ENCODE measurements at regions of chr14 and their contacts with region 1.

Region 1: DNA sequence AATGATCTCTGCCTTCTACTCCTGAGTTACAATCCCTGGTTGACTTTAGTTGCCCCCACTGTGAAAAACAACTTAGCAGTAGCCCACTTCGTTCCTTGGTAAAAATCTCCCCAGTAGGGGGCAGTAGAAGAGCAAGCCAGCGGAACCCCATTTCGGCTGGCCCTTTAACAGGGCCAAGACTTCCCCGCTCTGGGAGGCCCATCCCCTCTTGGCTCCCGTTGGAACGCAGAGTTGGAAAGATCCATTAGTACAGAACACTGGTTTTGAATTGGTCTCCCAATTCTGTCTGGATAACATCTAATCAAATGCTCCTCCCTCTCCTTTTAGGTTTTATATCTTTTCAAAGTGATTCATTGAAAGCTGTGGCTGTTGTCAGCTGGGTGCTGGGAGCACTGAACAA is 1133.3 kb downstream of the BCL11B start:
- DNase-seq: peak; percentile 66
- H3K4me3 Mint-ChIP-seq: no peak overlapping the region
- H3K27ac Mint-ChIP-seq: peak overlapping the region; percentile 58
- H3K4me1 Mint-ChIP-seq: peaks cover 69% of the 10 kb centered on the region
- H3K27me3 Mint-ChIP-seq: no peaks in the 10 kb centered on the region

Region 2: DNA sequence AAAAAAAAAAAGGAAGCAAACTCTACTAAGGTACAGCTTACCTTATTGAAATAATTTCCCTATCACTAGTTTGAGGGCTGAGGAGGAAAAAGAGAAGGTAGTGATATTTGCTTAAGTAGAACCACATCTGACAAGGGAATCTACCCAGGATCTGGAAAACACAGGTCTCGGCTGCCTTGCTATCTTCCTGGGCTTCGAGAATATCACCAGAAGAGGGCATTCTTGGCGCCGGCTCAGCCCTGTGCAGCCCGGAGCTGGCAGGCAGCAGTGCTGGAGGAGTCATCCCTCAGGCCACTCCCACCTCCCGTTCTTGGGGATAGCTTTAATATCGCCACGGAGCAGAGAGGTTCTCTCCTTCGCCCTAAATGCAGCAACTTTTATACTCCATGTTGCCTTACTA is 160.3 kb before region 1 on chr14:
- CTCF ChIA-PET with region 1: interaction called, 55 read pairs
- POLR2A ChIA-PET with region 1: interaction called, 46 read pairs
- DNase-seq: peak; percentile 81
- H3K4me3 Mint-ChIP-seq: peak overlapping the region; percentile 86
- H3K27ac Mint-ChIP-seq: peak overlapping the region; percentile 90
- H3K4me1 Mint-ChIP-seq: peaks cover 50% of the 10 kb centered on the region
- H3K27me3 Mint-ChIP-seq: no peaks in the 10 kb centered on the region

Region 3: GRCh38 chr14:98114122-98114895 is 24.4 kb before region 1 on chr14:
- CTCF ChIA-PET with region 1: no interaction called
- POLR2A ChIA-PET with region 1: no interaction called
- DNase-seq: no peak
- H3K4me3 Mint-ChIP-seq: no peak overlapping the region
- H3K27ac Mint-ChIP-seq: no peak overlapping the region
- H3K4me1 Mint-ChIP-seq: no peaks in the 10 kb centered on the region
- H3K27me3 Mint-ChIP-seq: no peaks in the 10 kb centered on the region

Region 4: DNA sequence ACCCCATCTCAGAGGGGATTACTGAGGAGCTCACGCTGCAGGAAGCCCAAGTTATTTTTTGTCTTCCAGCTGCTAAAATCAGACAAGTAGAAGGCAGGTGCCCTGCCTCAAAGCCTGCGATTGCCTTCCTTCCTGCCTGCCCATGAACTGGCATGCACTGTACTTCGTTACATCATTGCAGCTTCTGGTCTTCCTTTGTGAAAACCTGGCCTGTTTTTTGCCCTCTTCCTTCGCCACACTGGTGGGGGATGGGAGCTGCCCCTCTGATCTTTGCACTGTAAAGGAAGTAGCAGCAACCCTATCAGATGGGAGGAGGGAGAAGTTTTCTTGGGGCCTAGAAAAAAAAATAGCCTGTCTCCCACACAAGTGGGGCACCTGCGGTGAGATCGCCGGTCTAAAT is 34.6 kb after region 1 on chr14:
- CTCF ChIA-PET with region 1: interaction called, 36 read pairs
- POLR2A ChIA-PET with region 1: interaction called, 24 read pairs
- DNase-seq: peak; percentile 62
- H3K4me3 Mint-ChIP-seq: peak overlapping the region; percentile 40
- H3K27ac Mint-ChIP-seq: peak overlapping the region; percentile 86
- H3K4me1 Mint-ChIP-seq: peaks cover 92% of the 10 kb centered on the region
- H3K27me3 Mint-ChIP-seq: no peaks in the 10 kb centered on the region

Region 5: DNA sequence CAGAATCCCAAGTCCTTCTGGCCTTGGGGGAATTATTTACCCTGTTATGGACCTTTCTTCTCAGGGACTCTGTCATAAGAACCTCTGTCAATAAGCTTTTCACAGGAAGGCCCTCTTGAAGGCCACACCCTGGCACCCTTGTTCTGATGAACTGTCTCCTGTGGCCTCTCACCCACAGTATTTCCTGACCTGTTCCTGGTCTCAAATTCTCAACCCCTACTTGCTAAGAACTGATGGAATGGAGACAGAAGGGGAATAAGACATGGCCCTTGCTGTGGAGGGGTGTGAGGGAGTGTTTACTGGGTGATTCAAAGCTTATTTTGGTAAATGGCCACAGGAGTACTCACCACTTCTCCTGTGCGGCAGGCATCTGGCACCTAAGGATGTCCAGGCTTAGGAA is 50.4 kb after region 1 on chr14:
- CTCF ChIA-PET with region 1: interaction called, 68 read pairs
- POLR2A ChIA-PET with region 1: interaction called, 71 read pairs
- DNase-seq: peak; percentile 67
- H3K4me3 Mint-ChIP-seq: peak overlapping the region; percentile 53
- H3K27ac Mint-ChIP-seq: peak overlapping the region; percentile 95
- H3K4me1 Mint-ChIP-seq: peaks cover 89% of the 10 kb centered on the region
- H3K27me3 Mint-ChIP-seq: no peaks in the 10 kb centered on the region

Region 6: DNA sequence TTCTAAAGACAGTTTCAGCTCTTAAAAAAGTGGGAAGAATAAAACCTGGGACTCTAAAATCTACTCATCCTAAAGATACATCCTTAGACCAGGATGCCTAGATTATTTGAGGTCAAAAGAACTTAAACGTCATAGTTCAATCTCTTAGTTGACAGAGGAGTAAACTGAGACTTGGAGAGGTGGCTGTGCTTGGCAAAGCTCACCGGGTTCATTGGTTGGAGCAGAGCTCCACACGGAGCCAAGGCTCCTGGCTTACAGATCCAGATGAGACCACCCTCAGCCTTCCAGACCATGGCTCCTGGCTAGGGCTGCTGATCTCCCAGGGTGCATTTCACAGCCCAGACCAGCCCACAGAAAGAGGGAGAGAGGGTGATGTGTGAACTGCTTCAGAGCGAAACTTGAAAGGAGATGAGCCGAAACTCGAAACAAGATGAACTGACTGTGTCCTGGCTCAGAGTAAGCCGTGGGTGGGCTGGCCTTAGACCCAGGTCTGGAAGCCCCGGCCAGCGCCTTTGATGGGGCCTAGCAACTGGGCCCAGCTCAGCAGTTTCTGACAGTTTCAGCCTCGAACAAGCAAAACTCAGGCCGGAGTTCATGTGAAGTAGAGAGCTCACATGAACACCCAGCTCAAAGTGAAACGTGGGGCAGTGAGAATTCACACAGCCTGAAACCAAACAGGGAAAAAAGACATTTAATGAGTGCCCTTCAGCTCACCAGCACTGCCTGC is 88.5 kb after region 1 on chr14:
- CTCF ChIA-PET with region 1: interaction called, 11 read pairs
- POLR2A ChIA-PET with region 1: interaction called, 8 read pairs
- DNase-seq: peak; percentile 50
- H3K4me3 Mint-ChIP-seq: peak overlapping the region; percentile 21
- H3K27ac Mint-ChIP-seq: peak overlapping the region; percentile 87
- H3K4me1 Mint-ChIP-seq: peaks cover 77% of the 10 kb centered on the region
- H3K27me3 Mint-ChIP-seq: no peaks in the 10 kb centered on the region

Region 7: DNA sequence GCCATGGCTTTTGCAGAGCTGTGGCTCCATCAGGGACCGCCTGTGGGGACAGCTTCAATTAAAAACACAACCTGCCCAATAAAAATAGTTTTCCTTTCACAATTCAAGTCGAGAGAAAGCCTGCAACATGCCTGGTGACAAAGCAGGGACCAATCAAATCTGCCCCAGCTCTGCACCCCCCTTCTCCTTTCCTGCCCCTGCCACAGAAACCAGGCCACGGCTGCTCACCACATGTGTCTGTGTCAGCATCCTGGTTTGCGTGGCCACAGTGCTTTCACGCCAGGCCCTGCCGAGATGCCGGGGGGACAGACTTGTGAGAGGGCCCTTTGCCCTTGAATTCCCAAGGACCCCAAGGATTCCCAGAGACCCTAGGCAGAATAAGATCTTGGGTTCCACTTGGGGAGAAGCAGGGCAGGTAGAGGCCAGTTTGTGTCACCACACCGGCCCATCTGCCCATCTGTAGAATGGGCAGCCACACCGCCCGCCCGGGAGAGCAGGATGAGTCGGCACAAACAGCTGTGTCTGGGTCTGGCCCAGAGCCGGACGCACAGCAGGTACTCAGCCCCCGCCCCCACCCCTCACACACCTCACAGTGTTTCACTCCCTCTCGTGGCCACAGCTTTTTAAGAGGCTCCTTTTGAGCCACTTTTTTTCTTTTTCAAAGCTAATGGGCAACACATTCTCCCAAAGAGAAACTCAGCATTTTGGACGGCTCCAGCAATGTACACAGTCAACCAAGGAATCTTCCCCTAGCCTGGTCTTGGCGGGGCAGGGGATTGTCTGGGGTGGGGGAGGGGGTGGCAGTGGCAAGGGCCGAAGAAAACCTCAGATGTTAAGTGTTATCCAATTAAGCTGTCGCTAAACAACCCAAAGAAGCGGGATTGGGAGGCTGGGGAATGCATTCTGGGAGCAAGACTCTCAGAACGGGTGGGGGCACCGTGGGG is 1091.8 kb after region 1 on chr14:
- CTCF ChIA-PET with region 1: interaction called, 11 read pairs
- POLR2A ChIA-PET with region 1: interaction called, 6 read pairs
- DNase-seq: peak; percentile 93
- H3K4me3 Mint-ChIP-seq: peak overlapping the region; percentile 73
- H3K27ac Mint-ChIP-seq: peak overlapping the region; percentile 99
- H3K4me1 Mint-ChIP-seq: peaks cover 94% of the 10 kb centered on the region
- H3K27me3 Mint-ChIP-seq: no peaks in the 10 kb centered on the region

Region 8: GRCh38 chr14:99271951-99272631 is 1133.4 kb after region 1 on chr14 and contains the start of gene BCL11B:
- CTCF ChIA-PET with region 1: interaction called, 26 read pairs
- POLR2A ChIA-PET with region 1: interaction called, 64 read pairs
- DNase-seq: peak; percentile 93
- H3K4me3 Mint-ChIP-seq: peak within 1 kb of the TSS; percentile 89
- H3K27ac Mint-ChIP-seq: peak within 1 kb of the TSS; percentile 95
- H3K4me1 Mint-ChIP-seq: peaks cover 30% of the 10 kb centered on the region
- H3K27me3 Mint-ChIP-seq: peaks cover 20% of the 10 kb centered on the region
- total RNA-seq, gene BCL11B: 81.7 to 82.0 TPM

Measured in activated CD4-positive, alpha-beta memory T cell treated with anti-CD3 and anti-CD28 coated beads, Interleukin-2, amount 10 ng/mL, durations not matched to agents 7 days and 5 days (primary cell).